ENCODE measurements at regions of chr2 and their contacts with region 1.

Region 1: DNA sequence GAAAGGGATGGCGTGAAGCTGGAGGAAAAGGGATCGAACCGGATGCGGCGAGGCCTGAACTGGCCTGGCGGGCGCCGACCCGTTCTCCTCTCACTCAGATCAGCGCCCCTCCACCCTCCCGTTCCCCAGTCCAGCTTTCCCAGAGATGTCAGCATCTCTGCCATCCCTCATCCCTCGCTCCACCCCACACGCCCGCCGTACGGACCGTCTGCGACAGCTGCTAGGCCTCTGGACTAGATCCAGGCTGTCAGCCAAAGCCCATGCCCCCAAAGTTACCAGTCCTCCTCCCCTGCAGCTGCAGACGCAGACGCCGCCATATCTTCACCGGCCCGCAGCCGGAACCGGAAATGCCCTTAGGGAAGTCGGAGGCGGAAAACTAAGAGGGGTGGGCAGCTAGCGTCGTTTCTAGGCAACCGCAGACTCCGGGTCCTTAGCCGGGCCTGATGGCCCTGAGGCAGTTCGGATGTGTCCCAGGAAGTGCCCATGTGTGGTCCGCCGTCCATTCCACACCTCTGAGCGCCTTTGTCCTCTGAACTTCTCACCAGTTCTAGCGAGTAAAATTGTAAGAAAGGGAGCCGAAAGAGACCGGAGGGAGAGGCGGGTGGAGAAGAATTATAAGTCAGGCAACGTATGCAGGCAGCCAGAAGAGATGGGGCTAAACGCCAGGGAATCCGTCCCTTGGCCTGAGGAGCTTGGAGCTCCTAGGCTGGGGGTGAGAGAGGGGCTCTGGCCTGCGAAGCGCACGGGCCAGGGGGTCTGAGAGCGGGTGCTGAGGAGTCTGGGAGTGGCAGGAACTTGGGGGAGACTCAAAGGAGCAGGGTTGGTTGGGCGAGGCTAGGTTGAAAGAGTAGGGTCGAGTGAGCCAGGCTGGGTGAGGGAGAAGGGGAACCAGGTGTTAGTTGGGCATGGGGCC is at the starts of genes RNF25 and STK36:
- DNase-seq: peak; percentile 70 to 75
- ATAC-seq: peak; percentile 97
- H3K4me3 ChIP-seq: peak within 1 kb of the TSS; percentile 76 to 97 (median 89)
- H3K27ac ChIP-seq: peak within 1 kb of the TSS; percentile 73 to 84 (median 82)
- H3K4me1 ChIP-seq: peaks cover 13% of the 10 kb centered on the region in 2 donors
- H3K27me3 ChIP-seq: no peaks in the 10 kb centered on the region
- CTCF ChIP-seq: no peak
- POLR2A ChIP-seq: peak; percentile 50 to 79
- total RNA-seq, gene RNF25: 11.7 to 39.1 (median 26.1) TPM
- total RNA-seq, gene STK36: 3.0 to 16.3 (median 7.6) TPM

Region 2: GRCh38 chr2:218292048-218293014 is 379.6 kb before region 1 on chr2 and contains the start of gene TMBIM1:
- in situ Hi-C with region 1: loop called in 3 of 4 experiments (anchors 25 kb)
- intact Hi-C with region 1: no loop called
- DNase-seq: peak; percentile 56 to 78
- ATAC-seq: peak; percentile 74 to 83
- H3K4me3 ChIP-seq: peak within 1 kb of the TSS; percentile 71 to 100 (median 96)
- H3K27ac ChIP-seq: peak within 1 kb of the TSS; percentile 93 to 100 (median 98)
- H3K4me1 ChIP-seq: peaks cover 43 to 48% of the 10 kb centered on the region in 2 donors
- H3K27me3 ChIP-seq: no peaks in the 10 kb centered on the region
- CTCF ChIP-seq: peak; percentile 75 to 100 (median 98)
- POLR2A ChIP-seq: peak; percentile 89 to 95
- total RNA-seq, gene TMBIM1: 142 to 296 (median 215) TPM

Region 3: DNA sequence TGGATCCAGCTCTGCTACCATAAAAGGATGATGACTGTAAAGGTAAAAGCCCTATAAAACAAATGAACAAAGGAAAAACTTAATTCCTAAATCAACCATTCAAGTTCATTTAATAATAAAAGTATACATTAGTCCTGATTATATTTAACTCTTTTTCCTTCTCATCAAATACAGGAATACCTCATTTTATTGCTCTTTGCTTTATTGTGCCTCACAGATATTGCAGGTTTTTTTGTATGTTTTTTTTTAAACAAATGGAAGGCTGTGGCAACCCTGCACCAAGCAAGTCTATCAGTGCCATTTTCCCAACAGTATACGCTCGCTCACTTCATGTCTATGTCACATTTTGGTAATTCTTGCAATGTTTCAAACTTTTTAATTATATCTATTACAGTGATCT is 141.9 kb before region 1 on chr2:
- in situ Hi-C with region 1: no loop called
- intact Hi-C with region 1: no loop called
- DNase-seq: no peak
- ATAC-seq: no peak
- H3K4me3 ChIP-seq: no peak overlapping the region
- H3K27ac ChIP-seq: no peak overlapping the region
- H3K4me1 ChIP-seq: no peaks in the 10 kb centered on the region
- H3K27me3 ChIP-seq: no peaks in the 10 kb centered on the region
- CTCF ChIP-seq: no peak
- POLR2A ChIP-seq: no peak

Region 4: GRCh38 chr2:218710687-218711549 is 39.0 kb after region 1 on chr2 and contains the start of gene TTLL4:
- in situ Hi-C with region 1: no loop called
- intact Hi-C with region 1: loop called (anchors 2 kb)
- DNase-seq: peak; percentile 96 to 97
- ATAC-seq: peak; percentile 97 to 98
- H3K4me3 ChIP-seq: peak within 1 kb of the TSS; percentile 70 to 90 (median 83)
- H3K27ac ChIP-seq: peak within 1 kb of the TSS; percentile 81 to 92 (median 86)
- H3K4me1 ChIP-seq: peaks cover 9% of the 10 kb centered on the region in 2 donors
- H3K27me3 ChIP-seq: no peaks in the 10 kb centered on the region
- CTCF ChIP-seq: peak; percentile 84 to 95 (median 88)
- POLR2A ChIP-seq: peak; percentile 55 to 69
- total RNA-seq, gene TTLL4: 4.4 to 16.2 (median 6.4) TPM